GM13976 (cell line): ENCODE measurements at regions of chr1 and their contacts with region 1.

Region 1: GRCh38 chr1:119453021-119453420 is 38.1 kb downstream of the HSD3B2 start:
- DNase-seq: no peak
- CTCF ChIP-seq: no peak

Region 2: DNA sequence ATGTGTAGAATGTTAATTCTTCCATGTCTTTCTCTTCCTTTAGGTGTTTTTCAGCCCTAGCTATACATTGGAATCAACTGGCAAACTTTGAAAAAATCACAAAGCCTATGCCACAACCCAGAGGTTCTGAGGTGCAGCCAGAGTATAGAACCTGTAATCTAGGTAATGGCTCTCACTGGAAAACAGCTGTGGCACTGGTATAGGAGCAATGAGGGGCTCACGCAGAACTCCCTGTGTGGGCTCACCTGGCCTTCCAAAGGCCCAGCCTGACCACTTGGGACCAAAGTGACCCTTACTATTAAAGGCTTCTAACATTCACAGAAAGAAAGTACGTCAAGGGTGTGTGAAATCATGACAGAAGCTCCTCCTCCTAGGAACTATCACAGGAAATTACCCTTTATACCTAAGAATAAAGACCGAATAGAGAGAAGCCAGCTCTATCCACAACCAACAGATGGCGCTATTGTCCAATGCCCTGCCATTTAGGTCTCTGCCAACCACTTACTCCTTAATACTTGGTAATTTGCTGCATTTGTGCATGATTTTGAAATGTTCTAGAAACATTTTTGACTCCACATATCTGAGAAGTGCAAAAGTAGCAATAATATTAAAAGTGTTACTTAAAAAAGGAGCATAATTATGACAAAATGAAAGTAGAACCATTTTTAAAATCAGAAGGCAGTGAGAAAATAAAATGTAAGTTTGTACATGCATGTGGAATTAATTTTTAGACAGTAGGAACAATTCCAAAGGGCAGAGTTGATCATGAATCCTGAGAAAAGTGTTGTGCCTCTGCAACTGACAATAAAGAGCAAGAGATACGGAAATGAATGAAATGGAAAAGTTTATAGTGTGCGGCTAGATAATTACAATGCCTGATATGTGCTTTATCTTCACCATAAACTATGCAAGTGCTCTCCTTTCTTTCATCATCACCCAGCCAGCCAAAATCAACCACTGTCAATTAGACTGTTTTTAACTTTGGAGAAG is 177.6 kb before region 1 on chr1:
- in situ Hi-C with region 1: loop called (anchors 25 kb)
- DNase-seq: peak; percentile 39
- CTCF ChIP-seq: peak; percentile 81

Region 3: DNA sequence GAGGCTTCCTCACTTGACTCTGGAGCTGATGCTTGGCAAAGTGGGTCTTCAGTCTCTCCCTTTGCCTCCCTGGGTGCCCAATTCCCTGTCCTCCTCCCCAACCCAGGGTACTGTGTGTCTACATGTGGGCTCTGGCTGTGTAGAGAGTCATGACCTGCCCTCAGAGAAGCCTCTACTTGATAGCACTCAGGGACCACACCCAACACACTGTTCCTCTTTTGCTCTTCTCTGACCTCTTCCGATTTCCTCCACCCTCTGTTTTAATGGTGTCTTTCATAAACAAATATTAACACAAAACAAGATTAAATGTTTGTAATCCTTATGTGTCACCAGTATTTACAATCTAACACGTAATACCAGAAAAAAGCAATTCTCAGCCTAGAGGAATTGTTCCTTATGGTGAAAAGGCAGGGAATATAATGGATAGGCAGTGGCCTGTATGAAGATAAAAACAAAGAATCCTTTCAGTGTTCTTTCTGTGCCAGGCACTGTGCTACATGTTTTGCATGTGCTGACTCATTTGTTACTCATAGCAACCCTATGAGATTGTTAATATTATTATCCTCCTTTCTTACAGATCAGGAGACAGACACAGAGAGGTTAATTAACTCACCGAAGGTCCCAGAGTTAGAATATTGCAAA is 112.2 kb after region 1 on chr1:
- in situ Hi-C with region 1: no loop called
- DNase-seq: no peak
- CTCF ChIP-seq: no peak